OCI-LY7 (cell line): ENCODE measurements at regions of chr12 and their contacts with region 1.

Region 1: GRCh38 chr12:123043536-123044001 is 63.1 kb downstream of the ARL6IP4 start:
- DNase-seq: peak; percentile 79
- H3K4me3 ChIP-seq: no peak overlapping the region
- H3K27ac ChIP-seq: no peak overlapping the region
- H3K4me1 ChIP-seq: peaks cover 7% of the 10 kb centered on the region
- CTCF ChIP-seq: peak; percentile 80

Region 2: GRCh38 chr12:123150744-123151456 is 107.3 kb after region 1 on chr12 and contains the start of gene PITPNM2:
- CTCF ChIA-PET with region 1: no interaction called
- POLR2A ChIA-PET with region 1: no interaction called
- intact Hi-C with region 1: loop called (anchors 10 kb)
- DNase-seq: peak; percentile 55
- H3K4me3 ChIP-seq: peak within 1 kb of the TSS; percentile 55
- H3K27ac ChIP-seq: no peak within 1 kb of the TSS
- H3K4me1 ChIP-seq: no peaks in the 10 kb centered on the region
- CTCF ChIP-seq: no peak
- total RNA-seq, gene PITPNM2: 0.13 and 0.73 TPM in 2 replicates